GM18951 (cell line): ENCODE measurements at regions of chr7 and their contacts with region 1.

Region 1: GRCh38 chr7:47273974-47274766 is 307.7 kb downstream of the TNS3 start:
- POLR2A ChIP-seq: no peak

Region 2: DNA sequence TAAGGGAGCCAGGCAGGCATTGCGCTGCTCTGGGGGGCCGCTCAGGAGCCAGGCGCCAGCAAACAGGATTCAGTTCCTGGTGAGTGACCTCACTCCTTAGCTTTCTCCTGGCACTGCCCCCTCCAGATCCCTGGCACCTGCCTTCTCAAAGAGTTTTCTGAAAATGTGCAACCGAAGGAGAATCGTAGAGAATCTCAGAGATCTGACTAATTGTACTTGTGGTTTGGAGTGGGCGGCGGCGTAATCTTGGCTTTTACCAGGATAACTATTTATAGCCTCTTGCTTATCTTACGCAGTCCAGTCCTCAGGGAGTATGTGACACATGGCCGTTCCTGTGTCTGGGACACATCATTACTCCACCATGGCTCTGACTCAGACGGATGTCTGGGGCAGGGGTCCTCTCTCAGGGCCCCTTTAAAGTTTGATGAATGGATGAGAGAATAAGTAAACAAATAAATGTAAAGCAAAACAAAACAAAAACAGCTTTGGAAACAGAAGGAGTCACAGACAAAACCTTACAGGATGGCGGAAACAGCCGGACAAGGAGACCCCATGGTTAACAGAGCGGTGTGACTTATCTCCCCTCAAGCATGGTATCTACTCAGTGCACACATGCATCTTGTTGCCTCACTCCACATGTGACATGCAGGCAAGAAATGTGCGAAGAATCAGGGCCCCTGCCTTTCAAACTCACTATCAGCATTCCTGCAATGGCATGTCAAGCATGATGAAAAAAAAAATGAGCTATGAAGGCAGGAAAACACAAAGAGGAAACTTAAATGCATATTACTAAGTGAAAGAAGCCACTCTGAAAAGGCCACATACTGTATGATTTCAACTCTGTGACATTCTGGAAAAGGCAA is 208.1 kb after region 1 on chr7:
- in situ Hi-C with region 1: no loop called
- POLR2A ChIP-seq: no peak

Region 3: DNA sequence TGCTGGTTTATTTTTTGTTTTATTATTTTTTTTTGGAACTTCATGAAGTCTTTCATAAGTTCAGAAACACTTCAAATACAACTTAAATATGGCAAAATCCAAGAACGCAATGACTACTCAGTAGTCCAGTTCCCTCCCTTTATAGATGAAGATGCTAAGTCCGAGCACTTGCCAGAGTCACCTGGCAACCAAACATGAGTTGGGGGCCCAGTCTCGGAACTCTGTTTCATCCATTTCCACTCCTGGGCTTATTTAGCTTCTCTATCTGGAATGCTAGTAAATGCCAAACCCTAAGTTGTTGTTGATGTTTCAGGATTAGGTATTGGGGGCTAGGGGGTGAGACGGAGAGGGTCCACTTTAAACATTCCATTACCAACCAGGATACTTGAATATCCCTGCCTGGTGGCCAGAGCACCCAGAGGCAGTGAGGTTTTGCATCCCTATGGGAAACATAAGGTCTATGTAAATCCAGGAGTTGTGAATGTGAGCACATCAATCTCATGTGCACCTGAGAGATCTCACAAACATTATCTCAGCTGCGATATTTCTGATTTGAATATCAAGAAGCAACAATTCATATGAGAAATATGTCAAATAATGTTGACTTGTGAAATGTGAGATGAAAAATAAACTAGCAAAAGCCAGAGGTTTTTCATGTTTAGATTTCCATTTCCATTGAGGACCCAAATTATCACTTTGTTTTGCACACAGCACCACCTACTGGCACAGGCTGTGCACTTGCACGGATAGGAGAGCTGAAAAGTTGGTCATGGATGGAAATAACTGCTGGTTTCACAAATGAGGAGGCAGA is 544.8 kb after region 1 on chr7:
- in situ Hi-C with region 1: loop called (anchors 10 kb)
- POLR2A ChIP-seq: no peak